ENCODE measurements at regions of chr3 and their contacts with region 1.

Region 1: GRCh38 chr3:61371123-61371522 is 119.9 kb upstream of the FHIT start:
- DNase-seq: peak; percentile 10
- ATAC-seq: peak; percentile 56; the same call in 2 of the 3 replicates
- H3K4me3 ChIP-seq: no peak overlapping the region
- H3K27ac ChIP-seq: no peak overlapping the region
- H3K4me1 ChIP-seq: no peaks in the 10 kb centered on the region
- H3K27me3 ChIP-seq: no peaks in the 10 kb centered on the region
- CTCF ChIP-seq: peak; percentile 61
- EP300 ChIP-seq: no peak
- POLR2A ChIP-seq: no peak
- RAD21 ChIP-seq: peak; percentile 35; the same call in 1 of the 2 replicates

Region 2: GRCh38 chr3:61172684-61173083 is 198.4 kb before region 1 on chr3:
- CTCF ChIA-PET with region 1: no interaction called
- POLR2A ChIA-PET with region 1: no interaction called
- in situ Hi-C with region 1: no loop called
- intact Hi-C with region 1: loop called (anchors 5 kb)
- DNase-seq: peak; percentile 6
- ATAC-seq: peak; percentile 68; the same call in 2 of the 3 replicates
- H3K4me3 ChIP-seq: no peak overlapping the region
- H3K27ac ChIP-seq: no peak overlapping the region
- H3K4me1 ChIP-seq: peaks cover 10% of the 10 kb centered on the region
- H3K27me3 ChIP-seq: no peaks in the 10 kb centered on the region
- CTCF ChIP-seq: no peak
- EP300 ChIP-seq: no peak
- POLR2A ChIP-seq: no peak
- RAD21 ChIP-seq: no peak

Region 3: DNA sequence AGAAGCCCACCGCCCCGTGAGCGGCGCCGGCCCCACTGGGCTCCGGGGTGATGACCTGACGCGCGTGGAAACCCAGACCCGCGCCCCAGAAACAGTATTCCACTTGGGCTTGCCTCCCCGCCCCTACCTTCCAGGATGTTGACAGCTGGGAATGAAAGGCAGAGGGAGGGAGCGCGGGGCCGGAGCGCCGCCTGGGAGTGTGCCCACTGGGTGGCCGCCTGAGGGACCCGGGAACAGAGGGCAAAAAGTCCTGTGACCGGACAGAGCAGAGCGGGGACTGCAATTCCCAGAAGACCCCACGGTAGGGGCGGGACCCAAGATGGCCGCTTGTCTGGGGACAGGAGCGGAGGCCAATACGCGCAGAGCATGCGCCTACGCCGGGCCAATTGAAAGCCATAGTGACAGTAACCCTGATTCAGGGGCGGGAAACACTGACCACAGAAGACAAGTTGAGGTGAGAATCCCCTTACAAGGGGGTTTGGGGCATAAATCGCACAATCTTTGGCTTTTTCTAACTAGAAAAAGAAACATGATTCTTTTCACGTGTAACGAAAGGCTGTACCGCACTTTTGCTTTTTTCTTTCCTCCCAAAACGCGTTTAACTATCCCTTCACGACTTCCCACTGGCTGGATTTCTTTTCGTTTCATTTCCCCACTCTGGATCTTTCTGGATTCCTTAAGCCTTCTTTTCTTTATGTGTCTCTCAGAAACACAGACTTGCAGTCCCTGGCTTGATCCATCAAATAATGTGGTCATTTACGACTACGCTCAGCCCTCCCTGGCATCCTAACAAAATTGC is 119.8 kb before region 1 on chr3 and contains the start of gene FHIT:
- CTCF ChIA-PET with region 1: no interaction called
- POLR2A ChIA-PET with region 1: no interaction called
- in situ Hi-C with region 1: no loop called
- intact Hi-C with region 1: loop called (anchors 5 kb)
- DNase-seq: peak; percentile 94
- ATAC-seq: peak; percentile 97
- H3K4me3 ChIP-seq: peak within 1 kb of the TSS; percentile 67 to 88 (median 76)
- H3K27ac ChIP-seq: peak within 1 kb of the TSS; percentile 52
- H3K4me1 ChIP-seq: peaks cover 23% of the 10 kb centered on the region
- H3K27me3 ChIP-seq: no peaks in the 10 kb centered on the region
- CTCF ChIP-seq: peak; percentile 63
- EP300 ChIP-seq: no peak
- POLR2A ChIP-seq: peak; percentile 44 to 63; a peak in 3 of 4 replicates
- RAD21 ChIP-seq: peak; percentile 53
- total RNA-seq, gene FHIT: 4.0 and 4.1 TPM in 2 replicates

Region 4: GRCh38 chr3:61299343-61300005 is 71.6 kb before region 1 on chr3:
- CTCF ChIA-PET with region 1: no interaction called
- POLR2A ChIA-PET with region 1: no interaction called
- in situ Hi-C with region 1: no loop called
- intact Hi-C with region 1: loop called (anchors 2 kb)
- DNase-seq: peak; percentile 24
- ATAC-seq: peak; percentile 84
- H3K4me3 ChIP-seq: no peak overlapping the region
- H3K27ac ChIP-seq: no peak overlapping the region
- H3K4me1 ChIP-seq: no peaks in the 10 kb centered on the region
- H3K27me3 ChIP-seq: no peaks in the 10 kb centered on the region
- CTCF ChIP-seq: peak; percentile 29
- EP300 ChIP-seq: no peak
- POLR2A ChIP-seq: no peak
- RAD21 ChIP-seq: no peak

Measured in HepG2 (cell line).